Heart right ventricle (tissue), 16 donors: ENCODE measurements at regions of chr18 and their contacts with region 1.

Region 1: GRCh38 chr18:47870605-47871004 is 59.9 kb downstream of the SMAD2 start:
- DNase-seq: no peak
- ATAC-seq: no peak
- H3K4me3 ChIP-seq: no peak overlapping the region
- H3K27ac ChIP-seq: no peak overlapping the region
- H3K4me1 ChIP-seq: peaks cover 0 to 39% (median 18%) of the 10 kb centered on the region in 9 donors
- H3K27me3 ChIP-seq: no peaks in the 10 kb centered on the region
- CTCF ChIP-seq: peak in 1 of 9 donors; percentile 5

Region 2: DNA sequence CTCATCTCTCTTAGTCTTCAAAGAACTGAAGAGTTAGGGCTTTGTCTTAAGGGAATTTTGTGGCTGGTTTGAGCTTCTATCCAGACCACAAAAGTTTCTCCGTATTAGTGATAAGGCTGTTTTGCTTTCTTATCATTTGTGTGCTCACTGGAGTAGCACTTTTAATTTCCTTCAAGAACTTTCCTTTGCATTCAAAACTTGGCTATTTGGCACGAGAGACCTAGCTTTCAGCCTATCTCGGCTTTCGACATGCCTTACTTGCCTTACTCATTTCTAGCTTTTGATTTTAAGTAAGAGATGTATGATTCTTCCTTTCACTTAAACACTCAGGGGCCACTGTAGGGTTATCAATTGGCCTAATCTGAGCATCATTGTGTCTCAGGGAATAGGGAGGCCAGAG is 750.2 kb before region 1 on chr18:
- intact Hi-C with region 1: no loop called
- DNase-seq: no peak
- ATAC-seq: no peak
- H3K4me3 ChIP-seq: no peak overlapping the region
- H3K27ac ChIP-seq: no peak overlapping the region
- H3K4me1 ChIP-seq: no peaks in the 10 kb centered on the region
- H3K27me3 ChIP-seq: no peaks in the 10 kb centered on the region
- CTCF ChIP-seq: no peak

Region 3: DNA sequence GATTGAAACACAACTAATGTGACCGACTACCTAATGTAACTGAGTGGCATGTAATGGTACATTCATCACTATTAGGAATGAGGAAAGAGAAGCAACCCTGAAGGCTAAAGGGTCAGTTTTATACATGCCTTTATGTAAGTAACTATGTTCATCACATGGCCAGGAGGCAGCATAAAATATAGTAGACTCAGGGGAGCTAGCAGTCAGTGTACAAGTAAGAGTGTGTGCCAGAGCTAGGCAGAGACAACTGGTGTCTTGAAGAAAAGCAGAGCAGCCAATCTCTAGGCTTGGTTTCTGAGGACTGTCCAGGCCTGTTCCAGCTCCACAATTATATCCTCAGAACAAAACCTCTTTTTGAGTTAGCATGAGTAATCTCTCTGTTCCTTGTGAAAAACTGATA is 41.7 kb after region 1 on chr18:
- intact Hi-C with region 1: loop called in 3 of 10 experiments (anchors 5 to 10 kb)
- DNase-seq: no peak
- ATAC-seq: peak in 6 of 8 donors; percentile 37 to 64 (median 57)
- H3K4me3 ChIP-seq: no peak overlapping the region
- H3K27ac ChIP-seq: peak overlapping the region; percentile 5 to 81 (median 71)
- H3K4me1 ChIP-seq: peaks cover 6 to 84% (median 55%) of the 10 kb centered on the region in 9 donors
- H3K27me3 ChIP-seq: no peaks in the 10 kb centered on the region
- CTCF ChIP-seq: no peak

Region 4: GRCh38 chr18:47917923-47918610 is 47.5 kb after region 1 on chr18:
- intact Hi-C with region 1: loop called in 3 of 10 experiments (anchors 5 to 10 kb)
- DNase-seq: no peak
- ATAC-seq: no peak
- H3K4me3 ChIP-seq: no peak overlapping the region
- H3K27ac ChIP-seq: no peak overlapping the region
- H3K4me1 ChIP-seq: peaks cover 7 to 92% (median 60%) of the 10 kb centered on the region in 9 donors
- H3K27me3 ChIP-seq: no peaks in the 10 kb centered on the region
- CTCF ChIP-seq: no peak

Region 5: GRCh38 chr18:48007955-48008701 is 137.5 kb after region 1 on chr18:
- intact Hi-C with region 1: loop called in 2 of 10 experiments (anchors 10 kb)
- DNase-seq: peak; percentile 68 to 69
- ATAC-seq: peak; percentile 60 to 90 (median 85)
- H3K4me3 ChIP-seq: peak overlapping the region; percentile 22 to 68 (median 60)
- H3K27ac ChIP-seq: peak overlapping the region in 5 of 10 donors; percentile 30 to 68 (median 48)
- H3K4me1 ChIP-seq: peaks cover 0 to 27% (median 20%) of the 10 kb centered on the region in 9 donors
- H3K27me3 ChIP-seq: peaks cover 0 to 8% (median 0%) of the 10 kb centered on the region in 7 donors
- CTCF ChIP-seq: peak; percentile 59 to 94 (median 73)